ENCODE measurements at regions of chr7 and their contacts with region 1.

Region 1: DNA sequence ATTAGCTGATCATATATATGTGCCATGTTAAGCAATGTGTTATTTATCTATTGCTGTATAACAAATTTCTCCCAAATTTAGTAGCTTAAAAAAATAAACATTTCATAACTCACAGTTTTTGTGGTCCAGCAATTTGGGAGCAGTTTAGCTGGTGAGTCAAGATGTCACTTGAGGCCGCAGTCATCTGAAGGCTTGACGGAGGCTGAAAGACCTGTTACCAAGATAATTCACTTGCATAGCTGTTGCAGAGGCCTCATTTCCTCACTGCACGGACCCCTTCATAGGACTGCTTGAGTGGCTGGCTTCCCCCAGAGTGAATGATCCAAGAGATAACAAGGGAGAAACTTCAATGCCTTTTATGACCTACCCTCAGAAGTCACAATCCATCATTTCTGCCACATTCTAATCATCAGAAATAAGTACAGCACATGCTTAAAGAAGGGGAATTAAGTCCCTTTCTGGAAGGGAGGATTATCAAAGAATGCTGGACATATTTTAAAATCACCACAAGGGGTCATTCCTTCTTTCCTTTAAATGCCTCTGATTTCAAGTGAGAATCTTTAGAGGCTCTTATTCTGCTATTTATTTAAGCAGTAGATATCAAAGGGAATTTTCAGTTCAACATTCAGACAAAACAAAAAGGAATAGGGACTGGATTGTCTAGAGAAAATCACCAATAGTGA is 10.5 kb upstream of the SRPK2 start:
- DNase-seq: no peak
- H3K4me3 ChIP-seq: no peak overlapping the region
- H3K27ac ChIP-seq: no peak overlapping the region
- H3K27me3 ChIP-seq: no peaks in the 10 kb centered on the region
- CTCF ChIP-seq: peak; percentile 59

Region 2: GRCh38 chr7:105387621-105388372 is 11.4 kb before region 1 on chr7:
- CTCF ChIA-PET with region 1: interaction called, 7 read pairs
- POLR2A ChIA-PET with region 1: interaction called, 12 read pairs
- DNase-seq: no peak
- H3K4me3 ChIP-seq: peak overlapping the region; percentile 74
- H3K27ac ChIP-seq: peak overlapping the region; percentile 39
- H3K27me3 ChIP-seq: no peaks in the 10 kb centered on the region
- CTCF ChIP-seq: no peak